ENCODE measurements at regions of chr3 and their contacts with region 1.

Region 1: DNA sequence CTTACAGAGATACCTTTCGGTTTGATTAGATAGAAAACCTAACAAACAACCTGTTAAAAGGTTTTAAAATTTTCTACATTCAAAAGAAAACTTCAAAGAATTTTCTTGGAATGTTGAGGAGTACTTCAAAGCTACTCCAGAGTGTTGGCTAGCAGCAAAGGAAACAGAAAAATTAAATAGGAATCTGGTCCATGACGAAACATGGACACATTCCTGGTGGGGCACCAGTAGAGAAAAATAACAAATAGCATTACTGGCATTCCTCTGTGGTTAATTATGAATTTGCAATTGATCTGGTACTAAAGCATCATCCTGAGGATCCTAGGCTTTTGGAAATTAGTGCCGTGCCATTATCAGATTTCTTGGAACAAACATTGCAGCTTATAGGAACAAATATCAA is 59.5 kb upstream of the DPPA4 start:
- DNase-seq: no peak
- H3K4me3 ChIP-seq: no peak overlapping the region
- H3K27ac ChIP-seq: no peak overlapping the region
- H3K4me1 ChIP-seq: peaks cover 0 to 4% (median 0%) of the 10 kb centered on the region in 4 experiments; a peak in 1 of 7 replicates
- H3K27me3 ChIP-seq: no peaks in the 10 kb centered on the region
- CTCF ChIP-seq: no peak
- EP300 ChIP-seq: no peak
- POLR2A ChIP-seq: no peak
- RAD21 ChIP-seq: no peak

Region 2: DNA sequence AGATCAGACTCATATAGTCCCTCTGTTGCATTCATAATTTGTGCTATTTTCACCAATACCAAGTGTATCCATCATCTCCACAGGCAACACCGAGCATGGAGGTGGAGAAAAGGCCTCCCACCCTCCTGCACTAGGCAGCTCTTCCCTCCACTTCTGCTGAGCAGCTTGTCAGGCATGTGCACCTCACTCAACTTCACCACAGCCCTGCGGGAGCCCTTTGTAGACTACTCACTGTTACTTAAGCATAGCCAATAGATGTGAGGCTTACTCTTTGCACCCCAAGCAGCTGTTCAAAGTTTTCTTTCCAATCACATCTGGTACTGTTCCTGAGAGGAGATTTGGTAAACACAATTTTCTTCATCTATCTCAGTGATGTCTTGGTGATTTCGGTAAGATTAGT is 426.2 kb before region 1 on chr3:
- CTCF ChIA-PET with region 1: no interaction called
- POLR2A ChIA-PET with region 1: no interaction called
- DNase-seq: no peak
- H3K4me3 ChIP-seq: no peak overlapping the region
- H3K27ac ChIP-seq: no peak overlapping the region
- H3K4me1 ChIP-seq: no peaks in the 10 kb centered on the region
- H3K27me3 ChIP-seq: no peaks in the 10 kb centered on the region; a peak in 1 of 7 replicates
- CTCF ChIP-seq: no peak
- EP300 ChIP-seq: no peak
- POLR2A ChIP-seq: no peak
- RAD21 ChIP-seq: no peak

Region 3: DNA sequence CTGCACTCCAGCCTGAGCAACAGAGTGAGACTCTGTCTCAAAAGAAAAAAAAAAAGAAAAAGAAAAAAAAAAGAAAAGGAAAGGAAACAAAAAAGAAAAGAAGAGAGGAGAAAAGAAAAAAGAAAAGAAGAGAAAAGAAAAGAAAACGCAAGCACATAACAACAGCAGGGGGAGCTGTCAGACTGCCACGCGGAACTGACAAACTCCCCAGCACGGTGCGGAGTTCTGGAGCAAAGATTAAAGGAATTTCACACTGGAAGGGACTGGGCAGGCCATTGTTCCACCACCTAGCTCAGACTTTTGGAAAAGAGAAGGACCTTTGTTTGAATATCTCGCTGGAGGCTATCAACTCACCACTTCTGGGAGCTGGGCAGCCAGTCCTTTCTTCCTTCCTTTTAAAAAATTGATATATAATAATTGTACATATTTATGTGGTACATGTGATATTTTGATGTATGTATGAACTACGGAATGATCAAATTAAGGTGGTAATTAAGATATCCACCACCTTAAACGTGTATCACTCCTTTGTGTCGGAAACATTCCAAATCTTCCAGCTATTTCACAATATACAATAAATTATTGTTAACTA is 121.0 kb before region 1 on chr3:
- CTCF ChIA-PET with region 1: interaction called, 90 read pairs
- POLR2A ChIA-PET with region 1: no interaction called
- DNase-seq: peak; percentile 3 to 63
- H3K4me3 ChIP-seq: no peak overlapping the region
- H3K27ac ChIP-seq: no peak overlapping the region
- H3K4me1 ChIP-seq: no peaks in the 10 kb centered on the region; a peak in 2 of 7 replicates
- H3K27me3 ChIP-seq: no peaks in the 10 kb centered on the region
- CTCF ChIP-seq: peak; percentile 55 to 83 (median 63)
- EP300 ChIP-seq: 0 out of 3 replicates have a peak, but pooled peaks of 1 of the 2 experiments have one; percentile 3
- POLR2A ChIP-seq: no peak
- RAD21 ChIP-seq: peak; percentile 92 to 97

Region 4: DNA sequence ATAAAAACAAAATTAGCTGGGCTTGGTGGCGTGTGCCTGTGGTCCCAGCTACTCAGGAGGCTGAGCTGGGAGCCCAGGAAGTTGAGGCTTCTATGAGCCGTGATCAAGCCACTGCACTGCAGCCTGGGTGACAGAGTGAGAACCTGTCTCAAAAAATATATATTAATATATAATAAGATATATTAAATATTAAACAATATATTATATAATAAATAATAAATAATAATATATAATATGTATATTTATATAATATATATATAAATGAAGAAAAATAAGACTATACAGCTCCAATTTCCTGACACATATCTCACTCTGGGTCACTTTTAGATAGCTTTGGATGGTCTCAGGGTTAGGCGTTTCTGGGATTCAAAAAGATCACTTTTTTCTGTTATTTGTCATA is 14.7 kb after region 1 on chr3:
- CTCF ChIA-PET with region 1: interaction called, 14 read pairs
- POLR2A ChIA-PET with region 1: no interaction called
- DNase-seq: no peak
- H3K4me3 ChIP-seq: no peak overlapping the region
- H3K27ac ChIP-seq: no peak overlapping the region
- H3K4me1 ChIP-seq: peaks cover 0 to 3% (median 0%) of the 10 kb centered on the region in 4 experiments; a peak in 1 of 7 replicates
- H3K27me3 ChIP-seq: no peaks in the 10 kb centered on the region
- CTCF ChIP-seq: no peak
- EP300 ChIP-seq: no peak
- POLR2A ChIP-seq: no peak
- RAD21 ChIP-seq: no peak

Region 5: GRCh38 chr3:109442531-109442930 is 45.7 kb after region 1 on chr3:
- CTCF ChIA-PET with region 1: no interaction called
- POLR2A ChIA-PET with region 1: no interaction called
- DNase-seq: no peak
- H3K4me3 ChIP-seq: no peak overlapping the region
- H3K27ac ChIP-seq: no peak overlapping the region
- H3K4me1 ChIP-seq: no peaks in the 10 kb centered on the region
- H3K27me3 ChIP-seq: no peaks in the 10 kb centered on the region
- CTCF ChIP-seq: no peak
- EP300 ChIP-seq: no peak
- POLR2A ChIP-seq: no peak
- RAD21 ChIP-seq: no peak

Region 6: GRCh38 chr3:109853077-109853731 is 456.4 kb after region 1 on chr3:
- CTCF ChIA-PET with region 1: no interaction called
- POLR2A ChIA-PET with region 1: no interaction called
- DNase-seq: no peak
- H3K4me3 ChIP-seq: no peak overlapping the region
- H3K27ac ChIP-seq: no peak overlapping the region
- H3K4me1 ChIP-seq: no peaks in the 10 kb centered on the region
- H3K27me3 ChIP-seq: no peaks in the 10 kb centered on the region
- CTCF ChIP-seq: no peak
- EP300 ChIP-seq: no peak
- POLR2A ChIP-seq: no peak
- RAD21 ChIP-seq: no peak

Measured in H1 (cell line).